ENCODE measurements at regions of chr3 and their contacts with region 1.

Region 1: DNA sequence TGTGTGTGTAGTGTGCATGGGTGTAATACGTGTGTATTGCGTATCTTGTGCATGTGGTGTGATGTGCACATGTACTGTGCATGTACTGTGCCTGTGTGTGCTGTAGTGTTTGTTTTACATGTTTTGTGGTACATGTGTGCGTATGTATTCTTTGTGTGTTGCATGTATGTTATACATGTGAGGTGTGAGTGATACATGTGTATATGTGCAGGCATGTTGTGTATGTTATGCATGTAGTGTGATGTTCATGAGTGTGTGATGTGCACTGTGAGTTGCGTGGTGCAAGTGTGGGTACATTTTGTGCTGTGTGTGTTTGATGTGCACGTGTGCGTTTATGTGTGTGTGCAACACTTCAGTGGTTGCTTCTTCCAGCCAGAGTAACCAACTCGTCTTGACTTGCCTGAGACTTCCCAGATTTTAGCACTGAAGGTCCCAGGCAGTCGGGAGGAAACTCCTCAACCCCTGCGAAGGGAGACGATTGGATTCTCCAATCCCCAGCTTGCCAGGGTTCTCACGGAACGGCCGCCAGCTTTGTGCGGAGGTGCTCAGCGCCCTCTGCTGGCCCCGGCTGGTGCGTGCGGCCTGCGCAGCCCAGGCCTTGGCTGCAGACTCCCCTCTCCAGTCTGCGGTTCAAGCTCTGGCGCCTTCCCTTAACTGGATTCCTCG is 3.6 kb downstream of the GALNT15 start:
- DNase-seq: peak; percentile 74
- H3K4me3 Mint-ChIP-seq: no peak overlapping the region
- H3K27ac Mint-ChIP-seq: no peak overlapping the region
- H3K4me1 Mint-ChIP-seq: peaks cover 3% of the 10 kb centered on the region
- H3K27me3 Mint-ChIP-seq: peaks cover 13% of the 10 kb centered on the region

Region 2: GRCh38 chr3:15815696-15816095 is 362.4 kb before region 1 on chr3:
- CTCF ChIA-PET with region 1: interaction called, 7 read pairs
- POLR2A ChIA-PET with region 1: no interaction called
- intact Hi-C with region 1: loop called (anchors 2 kb)
- DNase-seq: no peak
- H3K4me3 Mint-ChIP-seq: no peak overlapping the region
- H3K27ac Mint-ChIP-seq: no peak overlapping the region
- H3K4me1 Mint-ChIP-seq: peaks cover 48% of the 10 kb centered on the region
- H3K27me3 Mint-ChIP-seq: no peaks in the 10 kb centered on the region

Region 3: GRCh38 chr3:16055606-16056209 is 122.4 kb before region 1 on chr3:
- CTCF ChIA-PET with region 1: interaction called, 108 read pairs
- POLR2A ChIA-PET with region 1: no interaction called
- intact Hi-C with region 1: no loop called
- DNase-seq: no peak
- H3K4me3 Mint-ChIP-seq: no peak overlapping the region
- H3K27ac Mint-ChIP-seq: no peak overlapping the region
- H3K4me1 Mint-ChIP-seq: peaks cover 3% of the 10 kb centered on the region
- H3K27me3 Mint-ChIP-seq: no peaks in the 10 kb centered on the region

Measured in activated CD4-positive, alpha-beta memory T cell treated with anti-CD3 and anti-CD28 coated beads for 36 hours (primary cell).